CD4-positive, alpha-beta T cell (primary cell): ENCODE measurements at regions of chr4 and their contacts with region 1.

Region 1: GRCh38 chr4:99054428-99054994 is 34.1 kb downstream of the ADH5 start:
- DNase-seq: no peak
- ATAC-seq: no peak
- H3K4me3 ChIP-seq: no peak overlapping the region
- H3K4me3 Mint-ChIP-seq: no peak overlapping the region
- H3K27ac ChIP-seq: no peak overlapping the region
- H3K27ac Mint-ChIP-seq: peak overlapping the region; percentile 10
- H3K4me1 ChIP-seq: peaks cover 5% of the 10 kb centered on the region
- H3K4me1 Mint-ChIP-seq: peaks cover 12% of the 10 kb centered on the region
- H3K27me3 ChIP-seq: no peaks in the 10 kb centered on the region
- H3K27me3 Mint-ChIP-seq: no peaks in the 10 kb centered on the region
- CTCF ChIP-seq: no peak

Region 2: DNA sequence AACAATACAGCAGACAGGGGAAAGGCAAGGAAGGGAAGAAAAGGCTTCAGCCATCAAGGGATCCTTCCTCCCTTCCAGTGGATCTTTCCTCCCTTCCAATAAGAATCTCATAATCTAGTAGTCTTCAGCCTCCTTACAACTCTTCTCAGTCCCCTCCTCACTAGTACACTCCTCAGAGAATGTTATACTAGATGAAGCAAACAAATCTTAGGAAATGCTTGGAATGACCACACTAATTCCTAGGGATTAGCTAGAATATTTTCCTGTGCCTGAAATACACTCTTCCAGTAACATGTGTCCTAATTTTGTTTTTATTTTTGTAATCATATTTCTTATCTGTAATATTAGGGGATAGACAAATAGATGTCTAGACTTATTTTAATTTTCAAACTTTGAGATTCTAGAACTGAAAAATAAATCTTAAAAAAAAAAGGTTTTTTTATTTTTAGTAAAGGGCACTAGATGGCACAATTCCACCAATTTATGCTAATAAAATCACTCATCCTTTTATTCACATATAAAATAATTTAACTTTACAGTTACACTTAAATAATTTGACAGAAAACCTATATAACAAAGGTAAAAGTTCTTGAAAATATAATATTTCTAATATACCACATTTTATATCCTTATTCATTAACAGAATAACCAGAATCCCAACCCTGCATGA is 904.3 kb before region 1 on chr4:
- CTCF ChIA-PET with region 1: interaction called, 3 read pairs
- POLR2A ChIA-PET with region 1: interaction called, 6 read pairs
- intact Hi-C with region 1: loop called in 1 of 2 experiments (anchors 2 kb)
- DNase-seq: peak in 3 of 14 experiments; percentile 13 to 22 (median 13)
- ATAC-seq: no peak
- H3K4me3 ChIP-seq: no peak overlapping the region
- H3K4me3 Mint-ChIP-seq: no peak overlapping the region
- H3K27ac ChIP-seq: no peak overlapping the region
- H3K27ac Mint-ChIP-seq: no peak overlapping the region
- H3K4me1 ChIP-seq: no peaks in the 10 kb centered on the region
- H3K4me1 Mint-ChIP-seq: peaks cover 5% of the 10 kb centered on the region
- H3K27me3 ChIP-seq: no peaks in the 10 kb centered on the region
- H3K27me3 Mint-ChIP-seq: no peaks in the 10 kb centered on the region
- CTCF ChIP-seq: peak; percentile 60

Region 3: GRCh38 chr4:98467627-98468072 is 586.9 kb before region 1 on chr4:
- CTCF ChIA-PET with region 1: interaction called, 4 read pairs
- POLR2A ChIA-PET with region 1: interaction called, 9 read pairs
- intact Hi-C with region 1: loop called (anchors 1 to 2 kb)
- DNase-seq: peak; percentile 48 to 84 (median 62)
- ATAC-seq: peak; percentile 97
- H3K4me3 ChIP-seq: peak overlapping the region; percentile 32
- H3K4me3 Mint-ChIP-seq: peak overlapping the region; percentile 59
- H3K27ac ChIP-seq: no peak overlapping the region
- H3K27ac Mint-ChIP-seq: no peak overlapping the region
- H3K4me1 ChIP-seq: peaks cover 18% of the 10 kb centered on the region
- H3K4me1 Mint-ChIP-seq: peaks cover 24% of the 10 kb centered on the region
- H3K27me3 ChIP-seq: no peaks in the 10 kb centered on the region
- H3K27me3 Mint-ChIP-seq: no peaks in the 10 kb centered on the region
- CTCF ChIP-seq: peak; percentile 84

Region 4: DNA sequence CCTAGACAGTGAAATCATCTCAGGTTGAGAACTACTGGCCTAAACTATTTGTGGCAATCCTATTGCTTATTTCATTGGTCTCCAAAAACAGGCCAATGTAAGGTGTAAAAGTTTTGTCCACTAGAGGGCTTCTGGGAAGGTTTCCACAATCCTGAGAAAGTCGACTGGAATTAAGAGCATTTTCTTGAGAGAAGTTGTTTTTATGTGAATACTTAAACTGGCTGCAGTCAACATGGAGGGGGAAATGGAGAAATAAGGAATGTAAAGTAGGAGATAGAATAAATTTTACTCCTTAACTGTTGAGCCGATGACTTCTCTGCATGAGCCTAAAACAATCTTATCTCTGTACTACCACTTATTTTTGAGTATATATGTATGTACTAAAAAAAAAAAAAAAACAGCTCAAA is 114.6 kb before region 1 on chr4:
- CTCF ChIA-PET with region 1: interaction called, 4 read pairs
- POLR2A ChIA-PET with region 1: interaction called, 3 read pairs
- intact Hi-C with region 1: loop called in 1 of 2 experiments (anchors 5 kb)
- DNase-seq: peak in 3 of 14 experiments; percentile 30 to 56 (median 54)
- ATAC-seq: peak; percentile 52
- H3K4me3 ChIP-seq: no peak overlapping the region
- H3K4me3 Mint-ChIP-seq: no peak overlapping the region
- H3K27ac ChIP-seq: no peak overlapping the region
- H3K27ac Mint-ChIP-seq: no peak overlapping the region
- H3K4me1 ChIP-seq: no peaks in the 10 kb centered on the region
- H3K4me1 Mint-ChIP-seq: peaks cover 7% of the 10 kb centered on the region
- H3K27me3 ChIP-seq: no peaks in the 10 kb centered on the region
- H3K27me3 Mint-ChIP-seq: no peaks in the 10 kb centered on the region
- CTCF ChIP-seq: peak; percentile 72

Region 5: GRCh38 chr4:99024481-99025275 is 29.8 kb before region 1 on chr4:
- CTCF ChIA-PET with region 1: interaction called, 10 read pairs
- POLR2A ChIA-PET with region 1: no interaction called
- intact Hi-C with region 1: no loop called
- DNase-seq: peak in 3 of 14 experiments; percentile 9 to 16 (median 14)
- ATAC-seq: no peak
- H3K4me3 ChIP-seq: no peak overlapping the region
- H3K4me3 Mint-ChIP-seq: no peak overlapping the region
- H3K27ac ChIP-seq: no peak overlapping the region
- H3K27ac Mint-ChIP-seq: peak overlapping the region; percentile 54
- H3K4me1 ChIP-seq: peaks cover 23% of the 10 kb centered on the region
- H3K4me1 Mint-ChIP-seq: peaks cover 85% of the 10 kb centered on the region
- H3K27me3 ChIP-seq: no peaks in the 10 kb centered on the region
- H3K27me3 Mint-ChIP-seq: no peaks in the 10 kb centered on the region
- CTCF ChIP-seq: no peak

Region 6: DNA sequence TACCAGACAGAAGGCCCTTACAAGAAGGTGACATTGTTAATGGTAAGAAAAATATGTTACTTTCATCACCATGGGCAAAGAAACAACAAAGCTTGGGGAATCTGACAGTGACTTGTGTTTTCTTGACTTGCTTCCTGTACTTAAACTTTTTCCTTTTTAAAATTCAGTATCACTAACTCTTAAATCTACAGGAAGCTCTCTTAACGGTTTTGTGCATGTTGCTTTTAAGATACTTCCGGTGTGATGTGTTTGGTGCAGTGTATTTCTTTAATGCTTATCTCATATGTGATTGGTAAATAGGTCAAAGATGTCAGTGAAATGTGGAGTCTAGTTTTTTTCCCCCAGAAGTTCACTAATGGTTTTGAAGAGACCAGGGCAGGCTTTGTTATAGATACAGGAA is 11.2 kb before region 1 on chr4:
- CTCF ChIA-PET with region 1: interaction called, 7 read pairs
- POLR2A ChIA-PET with region 1: interaction called, 17 read pairs
- intact Hi-C with region 1: no loop called
- DNase-seq: peak in 3 of 14 experiments; percentile 61 to 86 (median 61)
- ATAC-seq: peak; percentile 96
- H3K4me3 ChIP-seq: no peak overlapping the region
- H3K4me3 Mint-ChIP-seq: peak overlapping the region; percentile 8
- H3K27ac ChIP-seq: peak overlapping the region; percentile 48 to 81
- H3K27ac Mint-ChIP-seq: peak overlapping the region; percentile 85
- H3K4me1 ChIP-seq: peaks cover 5% of the 10 kb centered on the region
- H3K4me1 Mint-ChIP-seq: peaks cover 31% of the 10 kb centered on the region
- H3K27me3 ChIP-seq: no peaks in the 10 kb centered on the region
- H3K27me3 Mint-ChIP-seq: no peaks in the 10 kb centered on the region
- CTCF ChIP-seq: no peak

Region 7: GRCh38 chr4:99088481-99089365 is 34.2 kb after region 1 on chr4 and contains the start of gene ADH5:
- CTCF ChIA-PET with region 1: interaction called, 8 read pairs
- POLR2A ChIA-PET with region 1: interaction called, 14 read pairs
- intact Hi-C with region 1: loop called in 1 of 2 experiments (anchors 5 kb)
- DNase-seq: peak; percentile 86 to 96 (median 91)
- ATAC-seq: peak; percentile 95
- H3K4me3 ChIP-seq: peak within 1 kb of the TSS; percentile 93
- H3K4me3 Mint-ChIP-seq: peak within 1 kb of the TSS; percentile 95
- H3K27ac ChIP-seq: peak within 1 kb of the TSS; percentile 76 to 82
- H3K27ac Mint-ChIP-seq: peak within 1 kb of the TSS; percentile 93
- H3K4me1 ChIP-seq: peaks cover 25% of the 10 kb centered on the region
- H3K4me1 Mint-ChIP-seq: peaks cover 65% of the 10 kb centered on the region
- H3K27me3 ChIP-seq: no peaks in the 10 kb centered on the region
- H3K27me3 Mint-ChIP-seq: no peaks in the 10 kb centered on the region
- CTCF ChIP-seq: no peak
- total RNA-seq, gene ADH5: 49.1 to 52.0 TPM

Region 8: GRCh38 chr4:99117876-99118693 is 63.6 kb after region 1 on chr4:
- CTCF ChIA-PET with region 1: no interaction called
- POLR2A ChIA-PET with region 1: no interaction called
- intact Hi-C with region 1: no loop called
- DNase-seq: peak in 3 of 14 experiments; percentile 7 to 21 (median 15)
- ATAC-seq: no peak
- H3K4me3 ChIP-seq: no peak overlapping the region
- H3K4me3 Mint-ChIP-seq: no peak overlapping the region
- H3K27ac ChIP-seq: no peak overlapping the region
- H3K27ac Mint-ChIP-seq: no peak overlapping the region
- H3K4me1 ChIP-seq: no peaks in the 10 kb centered on the region
- H3K4me1 Mint-ChIP-seq: no peaks in the 10 kb centered on the region
- H3K27me3 ChIP-seq: no peaks in the 10 kb centered on the region
- H3K27me3 Mint-ChIP-seq: no peaks in the 10 kb centered on the region
- CTCF ChIP-seq: no peak

Region 9: GRCh38 chr4:99510721-99511120 is 456.2 kb after region 1 on chr4 and contains the start of gene C4orf17:
- CTCF ChIA-PET with region 1: no interaction called
- POLR2A ChIA-PET with region 1: no interaction called
- intact Hi-C with region 1: no loop called
- DNase-seq: no peak
- ATAC-seq: no peak
- H3K4me3 ChIP-seq: no peak within 1 kb of the TSS
- H3K4me3 Mint-ChIP-seq: no peak within 1 kb of the TSS
- H3K27ac ChIP-seq: no peak within 1 kb of the TSS
- H3K27ac Mint-ChIP-seq: peak within 1 kb of the TSS; percentile 90
- H3K4me1 ChIP-seq: peaks cover 14% of the 10 kb centered on the region
- H3K4me1 Mint-ChIP-seq: peaks cover 43% of the 10 kb centered on the region
- H3K27me3 ChIP-seq: no peaks in the 10 kb centered on the region
- H3K27me3 Mint-ChIP-seq: no peaks in the 10 kb centered on the region
- CTCF ChIP-seq: no peak
- total RNA-seq, gene C4orf17: not detected